Natural killer cell (primary cell): ENCODE measurements at regions of chr2 and their contacts with region 1.

Region 1: GRCh38 chr2:202911512-202912341 is at the starts of genes CARF and WDR12:
- DNase-seq: peak; percentile 87 to 96
- ATAC-seq: peak; percentile 83 to 95 (median 87)
- H3K4me3 ChIP-seq: peak within 1 kb of the TSS; percentile 83
- H3K4me3 Mint-ChIP-seq: peak within 1 kb of the TSS; percentile 99
- H3K27ac ChIP-seq: peak within 1 kb of the TSS; percentile 80
- H3K27ac Mint-ChIP-seq: peak within 1 kb of the TSS; percentile 94 to 99
- H3K4me1 ChIP-seq: peaks cover 3% of the 10 kb centered on the region
- H3K4me1 Mint-ChIP-seq: peaks cover 13 to 21% of the 10 kb centered on the region in 2 donors
- H3K27me3 ChIP-seq: no peaks in the 10 kb centered on the region
- H3K27me3 Mint-ChIP-seq: no peaks in the 10 kb centered on the region
- CTCF ChIP-seq: no peak
- total RNA-seq, gene CARF: 15.7 to 18.8 (median 16.0) TPM
- total RNA-seq, gene WDR12: 7.8 to 14.5 (median 12.9) TPM

Region 2: DNA sequence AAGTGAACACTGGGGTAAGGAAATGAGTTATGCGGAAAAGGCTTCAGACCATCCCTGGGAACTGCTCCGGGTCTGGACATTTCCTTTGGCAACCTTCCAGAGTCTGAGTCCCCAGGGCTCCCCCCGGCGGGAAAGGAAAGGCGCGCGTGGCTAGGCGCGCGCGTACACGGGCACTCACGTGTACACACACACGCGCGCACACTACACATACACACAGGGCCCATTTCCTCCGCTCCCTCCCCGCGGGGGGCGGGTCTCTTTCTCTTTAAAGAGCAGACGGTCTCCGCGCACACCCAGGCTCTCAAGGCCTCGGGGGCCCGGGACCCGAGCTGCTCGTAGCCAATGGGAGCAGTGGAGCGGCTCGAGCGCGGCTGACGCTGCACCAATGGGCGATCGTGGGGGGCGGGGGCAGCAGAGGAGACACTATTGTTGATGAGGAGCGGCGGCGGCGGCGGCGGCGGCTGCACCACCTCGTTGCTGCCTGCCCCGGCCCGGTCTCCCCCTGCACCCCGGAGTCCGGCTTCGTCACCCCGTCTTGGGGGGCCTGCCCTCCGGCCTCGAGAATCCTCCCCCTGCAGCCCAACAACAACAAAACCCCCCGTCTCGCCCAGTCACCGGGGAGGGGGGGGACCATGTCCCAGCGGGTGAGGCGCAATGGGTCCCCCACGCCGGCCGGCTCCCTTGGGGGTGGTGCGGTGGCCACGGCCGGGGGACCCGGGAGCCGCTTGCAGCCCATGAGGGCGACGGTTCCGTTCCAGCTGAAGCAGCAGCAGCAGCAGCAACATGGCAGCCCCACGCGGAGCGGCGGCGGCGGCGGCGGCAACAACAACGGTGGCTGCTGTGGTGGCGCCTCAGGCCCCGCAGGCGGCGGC is 276.9 kb before region 1 on chr2 and contains the start of gene FAM117B:
- intact Hi-C with region 1: loop called (anchors 2 kb)
- DNase-seq: peak; percentile 94 to 98
- ATAC-seq: peak; percentile 90 to 96 (median 92)
- H3K4me3 ChIP-seq: peak within 1 kb of the TSS; percentile 79
- H3K4me3 Mint-ChIP-seq: peak within 1 kb of the TSS; percentile 95
- H3K27ac ChIP-seq: peak within 1 kb of the TSS; percentile 79
- H3K27ac Mint-ChIP-seq: peak within 1 kb of the TSS; percentile 93 to 98
- H3K4me1 ChIP-seq: peaks cover 13% of the 10 kb centered on the region
- H3K4me1 Mint-ChIP-seq: peaks cover 18 to 25% of the 10 kb centered on the region in 2 donors
- H3K27me3 ChIP-seq: no peaks in the 10 kb centered on the region
- H3K27me3 Mint-ChIP-seq: no peaks in the 10 kb centered on the region
- CTCF ChIP-seq: no peak
- total RNA-seq, gene FAM117B: 11.6 to 14.2 (median 13.1) TPM

Region 3: DNA sequence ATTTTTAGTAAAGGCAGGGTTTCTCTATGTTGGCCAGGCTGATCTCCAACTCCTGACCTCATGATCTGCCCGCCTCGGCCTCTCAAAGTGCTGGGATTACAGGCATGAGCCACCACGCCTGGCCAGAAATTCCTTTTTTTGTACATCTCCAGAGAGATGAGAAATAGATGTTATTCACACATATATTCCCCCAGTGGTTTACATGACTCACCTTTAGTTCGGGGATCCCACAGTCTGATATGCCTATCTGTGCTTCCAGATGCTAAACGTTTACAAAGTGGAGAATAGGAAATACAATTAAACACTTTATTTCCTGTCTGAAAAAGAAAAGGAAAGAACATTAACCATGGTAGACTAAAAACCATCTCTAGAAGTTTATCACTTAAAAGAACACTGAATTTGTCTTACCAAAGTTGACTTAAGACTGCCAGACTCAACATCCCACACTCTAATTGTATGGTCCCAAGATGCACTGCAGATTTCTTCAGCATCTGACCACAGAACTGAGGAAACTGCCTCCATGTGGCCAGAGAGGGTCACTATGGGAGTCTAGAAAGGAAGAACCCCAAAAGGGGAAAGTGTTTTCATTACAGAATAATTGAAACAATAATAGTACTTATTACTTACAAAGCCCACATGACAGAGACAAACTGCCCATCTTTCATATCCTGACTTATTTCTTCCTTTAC is 27.6 kb before region 1 on chr2:
- intact Hi-C with region 1: no loop called
- DNase-seq: no peak
- ATAC-seq: no peak
- H3K4me3 ChIP-seq: no peak overlapping the region
- H3K4me3 Mint-ChIP-seq: no peak overlapping the region
- H3K27ac ChIP-seq: no peak overlapping the region
- H3K27ac Mint-ChIP-seq: no peak overlapping the region
- H3K4me1 ChIP-seq: no peaks in the 10 kb centered on the region
- H3K4me1 Mint-ChIP-seq: no peaks in the 10 kb centered on the region
- H3K27me3 ChIP-seq: no peaks in the 10 kb centered on the region
- H3K27me3 Mint-ChIP-seq: no peaks in the 10 kb centered on the region
- CTCF ChIP-seq: no peak

Region 4: DNA sequence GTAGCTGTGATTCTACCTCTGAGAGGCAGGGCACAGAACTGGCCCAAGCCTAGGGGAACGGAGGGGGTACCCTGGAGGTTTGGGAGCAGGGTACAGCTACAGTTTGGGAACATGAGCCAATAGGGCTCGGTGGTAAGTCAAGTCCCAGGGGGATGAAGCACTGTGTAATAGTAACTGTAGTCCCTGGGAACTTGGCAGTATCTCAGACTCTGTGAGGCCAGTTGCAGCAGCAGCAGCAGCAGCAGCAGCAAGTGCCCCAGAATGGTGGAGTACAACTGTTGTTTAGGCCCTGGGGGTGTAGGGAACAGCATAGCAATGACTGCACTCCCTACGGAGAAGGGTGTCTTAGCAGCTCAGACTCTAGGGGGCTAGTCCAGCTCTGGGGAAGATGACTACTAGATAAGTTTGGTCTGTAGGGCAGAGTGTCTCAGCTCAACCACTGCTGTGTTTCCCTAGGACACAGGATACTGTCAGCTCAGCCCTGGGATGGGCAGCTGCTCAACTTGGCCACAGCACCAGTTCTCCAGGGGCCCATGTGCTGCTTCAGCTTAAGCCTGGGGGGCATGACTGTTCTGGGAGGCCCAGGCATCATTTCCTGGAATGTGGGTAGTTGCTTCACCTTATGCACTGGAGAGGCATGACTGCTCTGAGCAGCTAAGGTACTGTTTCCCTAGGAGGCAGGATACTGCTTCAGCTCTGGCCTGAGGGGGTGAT is 20.9 kb after region 1 on chr2:
- intact Hi-C with region 1: no loop called
- DNase-seq: no peak
- ATAC-seq: no peak
- H3K4me3 ChIP-seq: no peak overlapping the region
- H3K4me3 Mint-ChIP-seq: no peak overlapping the region
- H3K27ac ChIP-seq: no peak overlapping the region
- H3K27ac Mint-ChIP-seq: no peak overlapping the region
- H3K4me1 ChIP-seq: no peaks in the 10 kb centered on the region
- H3K4me1 Mint-ChIP-seq: peaks cover 7% of the 10 kb centered on the region in 2 donors
- H3K27me3 ChIP-seq: no peaks in the 10 kb centered on the region
- H3K27me3 Mint-ChIP-seq: no peaks in the 10 kb centered on the region
- CTCF ChIP-seq: no peak

Region 5: DNA sequence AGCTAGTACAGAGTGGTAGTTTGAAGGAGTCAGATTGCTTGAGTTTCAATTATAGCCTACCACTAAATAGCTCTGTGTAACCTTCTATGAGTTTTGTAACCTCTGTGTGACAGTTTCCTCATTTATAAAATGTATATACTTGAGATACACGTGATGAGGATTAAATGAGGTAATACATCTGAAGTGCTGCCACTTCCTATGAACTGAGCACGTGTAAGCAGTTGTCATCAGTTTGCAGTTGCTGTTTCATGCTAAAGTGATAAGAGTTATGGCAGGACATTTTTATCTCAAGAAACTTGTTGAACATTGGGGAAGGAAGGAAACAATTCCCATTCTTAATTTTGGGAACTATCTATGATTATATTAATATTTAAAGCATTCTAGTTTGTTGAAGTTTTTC is 38.9 kb after region 1 on chr2:
- intact Hi-C with region 1: no loop called
- DNase-seq: no peak
- ATAC-seq: peak; percentile 40 to 62 (median 50)
- H3K4me3 ChIP-seq: no peak overlapping the region
- H3K4me3 Mint-ChIP-seq: no peak overlapping the region
- H3K27ac ChIP-seq: no peak overlapping the region
- H3K27ac Mint-ChIP-seq: no peak overlapping the region
- H3K4me1 ChIP-seq: no peaks in the 10 kb centered on the region
- H3K4me1 Mint-ChIP-seq: no peaks in the 10 kb centered on the region
- H3K27me3 ChIP-seq: no peaks in the 10 kb centered on the region
- H3K27me3 Mint-ChIP-seq: no peaks in the 10 kb centered on the region
- CTCF ChIP-seq: no peak

Region 6: GRCh38 chr2:203014456-203015199 is 102.9 kb after region 1 on chr2 and contains the start of gene NBEAL1:
- intact Hi-C with region 1: loop called (anchors 1 kb)
- DNase-seq: peak; percentile 98 to 99
- ATAC-seq: peak; percentile 91 to 96 (median 92)
- H3K4me3 ChIP-seq: peak within 1 kb of the TSS; percentile 84
- H3K4me3 Mint-ChIP-seq: peak within 1 kb of the TSS; percentile 98
- H3K27ac ChIP-seq: peak within 1 kb of the TSS; percentile 90
- H3K27ac Mint-ChIP-seq: peak within 1 kb of the TSS; percentile 97 to 99
- H3K4me1 ChIP-seq: peaks cover 13% of the 10 kb centered on the region
- H3K4me1 Mint-ChIP-seq: peaks cover 29 to 35% of the 10 kb centered on the region in 2 donors
- H3K27me3 ChIP-seq: peaks cover 2% of the 10 kb centered on the region
- H3K27me3 Mint-ChIP-seq: peaks cover 0 to 13% of the 10 kb centered on the region in 2 donors
- CTCF ChIP-seq: no peak
- total RNA-seq, gene NBEAL1: 12.2 to 19.7 (median 12.9) TPM